Activated B cell treated with CpG ODN at 0.5 μM for 24 hours (primary cell): ENCODE measurements at regions of chr2 and their contacts with region 1.

Region 1: DNA sequence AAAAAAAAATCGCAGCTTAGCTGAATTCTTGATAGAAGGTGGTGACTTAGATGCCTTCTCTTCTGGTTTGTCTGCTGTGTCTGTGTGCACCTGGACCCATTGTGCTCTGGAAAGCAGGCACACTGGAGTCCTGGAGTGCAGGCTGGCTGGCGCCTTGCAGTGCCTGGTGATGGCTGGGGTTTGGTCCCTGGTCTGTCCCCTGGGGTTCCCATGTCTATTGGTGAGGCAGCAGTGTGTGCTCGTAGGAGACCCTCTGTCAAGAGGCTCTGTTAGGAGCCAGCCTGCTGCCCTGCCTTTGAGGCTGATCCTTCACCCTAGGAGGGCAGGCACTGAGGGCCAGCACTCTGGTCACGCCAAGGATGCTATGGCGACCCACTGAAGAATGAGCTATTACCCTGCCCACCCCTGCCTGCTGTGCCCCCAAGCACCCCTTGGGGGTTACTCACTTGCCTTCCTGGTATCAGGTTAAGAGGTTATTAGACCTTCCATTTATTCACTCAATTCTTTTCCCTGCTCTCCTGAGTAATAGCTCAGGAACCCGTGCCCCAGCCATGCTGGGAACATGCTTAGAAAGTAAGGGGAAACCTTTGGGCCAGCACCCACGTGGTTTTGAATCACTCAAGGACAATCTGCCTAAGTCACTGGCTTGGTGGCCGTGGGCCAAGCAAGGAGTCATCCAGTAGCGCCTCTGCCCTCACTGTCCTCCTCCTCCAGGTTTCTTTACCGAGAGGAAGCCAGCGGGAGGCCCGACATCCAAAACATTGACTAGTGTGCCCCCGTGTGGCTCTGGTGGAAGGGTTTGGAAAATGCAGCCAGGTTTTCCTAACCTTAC is 284.5 kb downstream of the PRKCE start:
- DNase-seq: peak; percentile 41
- ATAC-seq: peak; percentile 85
- H3K4me3 Mint-ChIP-seq: no peak overlapping the region
- H3K27ac Mint-ChIP-seq: no peak overlapping the region
- H3K4me1 Mint-ChIP-seq: peaks cover 6% of the 10 kb centered on the region
- H3K27me3 Mint-ChIP-seq: no peaks in the 10 kb centered on the region
- CTCF ChIP-seq: no peak

Region 2: DNA sequence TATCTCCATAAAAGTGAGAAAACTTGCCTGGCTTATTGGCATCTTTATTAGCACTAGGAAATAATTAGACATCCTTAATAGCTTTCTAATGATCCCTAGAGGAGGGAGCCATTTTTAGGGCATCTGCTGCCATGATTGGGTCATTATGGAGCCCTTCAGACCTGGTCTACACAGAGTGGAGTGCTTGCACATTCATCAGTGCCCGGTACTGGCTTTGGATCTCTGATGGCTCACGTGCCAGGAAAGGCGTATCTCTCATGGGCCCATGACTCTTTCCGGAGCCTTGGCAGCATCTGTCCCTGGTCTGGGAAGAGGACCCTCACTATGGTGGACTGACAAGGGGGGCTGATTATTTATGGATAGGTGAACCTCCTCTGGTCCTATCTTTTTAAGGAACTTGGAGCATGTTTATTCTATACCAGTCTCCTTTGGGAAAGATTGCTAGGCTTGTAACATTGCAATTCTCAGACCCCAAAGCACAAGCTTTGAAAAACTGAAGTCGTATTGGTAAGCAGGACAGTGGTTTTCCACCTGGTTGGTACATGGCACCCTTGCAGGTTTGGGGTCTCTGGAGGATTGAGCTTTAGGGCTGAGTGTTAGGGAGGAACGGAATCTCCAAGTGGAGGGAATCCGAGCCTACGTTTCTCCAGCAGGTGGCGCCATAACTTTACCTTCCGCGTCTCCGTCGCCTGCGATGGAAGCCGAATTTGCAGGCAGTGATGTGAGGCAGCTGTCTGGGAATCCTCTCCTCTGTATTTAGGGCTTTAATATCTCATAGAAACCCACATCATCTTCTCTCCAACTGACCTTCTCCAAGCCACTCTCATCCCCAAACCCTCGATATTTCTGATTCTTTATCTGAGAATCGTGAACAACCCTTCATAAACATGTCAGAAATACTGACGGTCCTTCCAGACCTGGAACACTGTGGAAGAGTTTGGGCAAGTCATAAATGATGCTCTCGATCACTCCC is 954.6 kb before region 1 on chr2:
- CTCF ChIA-PET with region 1: no interaction called
- POLR2A ChIA-PET with region 1: no interaction called
- intact Hi-C with region 1: loop called (anchors 5 kb)
- DNase-seq: peak; percentile 50
- ATAC-seq: no peak
- H3K4me3 Mint-ChIP-seq: no peak overlapping the region
- H3K27ac Mint-ChIP-seq: no peak overlapping the region
- H3K4me1 Mint-ChIP-seq: peaks cover 2% of the 10 kb centered on the region
- H3K27me3 Mint-ChIP-seq: peaks cover 8% of the 10 kb centered on the region
- CTCF ChIP-seq: peak; percentile 37

Region 3: GRCh38 chr2:45585267-45585861 is 350.6 kb before region 1 on chr2:
- CTCF ChIA-PET with region 1: interaction called, 13 read pairs
- POLR2A ChIA-PET with region 1: no interaction called
- intact Hi-C with region 1: loop called (anchors 1 kb)
- DNase-seq: no peak
- ATAC-seq: peak; percentile 52
- H3K4me3 Mint-ChIP-seq: no peak overlapping the region
- H3K27ac Mint-ChIP-seq: no peak overlapping the region
- H3K4me1 Mint-ChIP-seq: peaks cover 13% of the 10 kb centered on the region
- H3K27me3 Mint-ChIP-seq: no peaks in the 10 kb centered on the region
- CTCF ChIP-seq: peak; percentile 48

Region 4: DNA sequence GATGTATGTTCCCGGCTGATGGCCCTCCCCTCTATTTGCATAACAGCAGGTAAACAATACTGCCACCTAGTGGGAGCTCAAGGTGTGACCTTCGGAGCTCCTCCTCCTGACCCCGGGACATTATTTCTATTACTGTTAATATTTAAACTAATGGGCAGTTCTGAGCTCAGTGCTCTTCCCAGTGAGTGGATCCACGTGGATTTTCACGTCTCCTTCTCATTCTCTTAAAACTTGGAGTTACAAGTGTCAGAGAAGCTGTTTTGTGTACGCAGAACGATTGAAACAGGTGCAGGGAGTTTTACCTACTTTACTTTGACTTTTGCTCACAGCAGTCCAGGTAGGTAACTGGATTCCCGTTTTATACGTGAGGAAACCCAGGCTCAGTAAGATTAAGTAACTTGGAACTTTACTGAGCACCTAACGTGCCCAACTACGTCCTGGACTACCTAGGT is 157.3 kb before region 1 on chr2:
- CTCF ChIA-PET with region 1: interaction called, 29 read pairs
- POLR2A ChIA-PET with region 1: interaction called, 3 read pairs
- intact Hi-C with region 1: loop called (anchors 1 kb)
- DNase-seq: peak; percentile 35
- ATAC-seq: peak; percentile 83
- H3K4me3 Mint-ChIP-seq: peak overlapping the region; percentile 44
- H3K27ac Mint-ChIP-seq: peak overlapping the region; percentile 39
- H3K4me1 Mint-ChIP-seq: peaks cover 76% of the 10 kb centered on the region
- H3K27me3 Mint-ChIP-seq: no peaks in the 10 kb centered on the region
- CTCF ChIP-seq: no peak

Region 5: GRCh38 chr2:46018773-46019591 is 83.0 kb after region 1 on chr2:
- CTCF ChIA-PET with region 1: no interaction called
- POLR2A ChIA-PET with region 1: no interaction called
- intact Hi-C with region 1: no loop called
- DNase-seq: no peak
- ATAC-seq: no peak
- H3K4me3 Mint-ChIP-seq: no peak overlapping the region
- H3K27ac Mint-ChIP-seq: no peak overlapping the region
- H3K4me1 Mint-ChIP-seq: no peaks in the 10 kb centered on the region
- H3K27me3 Mint-ChIP-seq: no peaks in the 10 kb centered on the region
- CTCF ChIP-seq: no peak